Right ventricle myocardium superior (tissue), 1 donor: ENCODE measurements at regions of chrX and their contacts with region 1.

Region 1: GRCh38 chrX:24498975-24499374 is 33.9 kb downstream of the PDK3 start:
- DNase-seq: no peak
- ATAC-seq: no peak

Region 2: DNA sequence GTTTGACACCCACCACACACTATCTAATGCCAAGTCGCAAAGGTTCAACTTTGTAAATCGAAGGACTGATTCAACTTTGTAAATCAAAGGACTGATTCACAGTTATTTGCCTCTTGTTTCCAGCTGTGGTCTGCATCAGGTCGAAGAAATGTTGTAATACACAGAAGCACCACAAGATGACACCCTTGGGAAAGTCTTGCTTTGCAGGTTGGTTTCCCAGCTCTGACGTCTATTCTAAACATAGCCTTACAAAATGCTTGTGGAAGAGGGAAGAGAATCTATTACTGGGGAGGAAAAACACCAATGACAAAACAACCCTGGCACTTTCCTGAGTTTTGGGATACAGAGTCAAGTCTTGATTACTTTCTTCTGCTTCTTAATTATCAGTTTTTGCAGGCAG is 103.2 kb before region 1 on chrX:
- intact Hi-C with region 1: loop called (anchors 5 kb)
- DNase-seq: no peak
- ATAC-seq: peak; percentile 80

Region 3: GRCh38 chrX:24464836-24465531 is 34.0 kb before region 1 on chrX and contains the start of gene PDK3:
- intact Hi-C with region 1: no loop called
- DNase-seq: peak; percentile 94
- ATAC-seq: peak; percentile 100
- total RNA-seq, gene PDK3: 5.1 TPM